ENCODE measurements at regions of chr1 and their contacts with region 1.

Region 1: GRCh38 chr1:214637722-214638458 is 34.9 kb downstream of the CENPF start:
- DNase-seq: peak in 5 of 9 experiments; percentile 14 to 64 (median 28)
- ATAC-seq: peak; percentile 42
- H3K4me3 ChIP-seq: no peak overlapping the region
- H3K4me3 Mint-ChIP-seq: peak overlapping the region; percentile 35
- H3K27ac ChIP-seq: no peak overlapping the region
- H3K27ac Mint-ChIP-seq: peak overlapping the region; percentile 80
- H3K4me1 ChIP-seq: peaks cover 52% of the 10 kb centered on the region
- H3K4me1 Mint-ChIP-seq: peaks cover 24% of the 10 kb centered on the region
- H3K27me3 ChIP-seq: no peaks in the 10 kb centered on the region
- H3K27me3 Mint-ChIP-seq: no peaks in the 10 kb centered on the region
- CTCF ChIP-seq: peak; percentile 67

Region 2: DNA sequence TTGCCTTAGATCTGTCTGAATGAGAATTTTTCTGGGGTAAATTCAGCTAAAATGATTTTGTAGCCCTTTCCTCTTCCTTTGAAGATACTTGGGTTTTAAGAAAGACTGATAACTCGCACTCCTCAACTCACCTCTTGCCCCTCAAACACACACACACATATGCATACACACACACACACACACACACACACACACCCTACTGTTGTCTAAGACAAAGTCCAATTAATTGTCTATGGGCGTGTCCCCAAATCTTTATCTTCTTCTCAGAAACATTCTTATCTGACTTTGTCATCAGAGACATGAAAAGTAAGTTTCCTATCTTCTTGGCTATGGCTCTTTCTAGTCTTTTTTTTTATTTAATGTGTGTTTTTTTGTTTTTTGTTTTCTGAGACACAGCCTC is 393.0 kb before region 1 on chr1:
- CTCF ChIA-PET with region 1: no interaction called
- POLR2A ChIA-PET with region 1: no interaction called
- intact Hi-C with region 1: no loop called
- DNase-seq: no peak
- ATAC-seq: no peak
- H3K4me3 ChIP-seq: no peak overlapping the region
- H3K4me3 Mint-ChIP-seq: no peak overlapping the region
- H3K27ac ChIP-seq: no peak overlapping the region
- H3K27ac Mint-ChIP-seq: no peak overlapping the region
- H3K4me1 ChIP-seq: no peaks in the 10 kb centered on the region
- H3K4me1 Mint-ChIP-seq: no peaks in the 10 kb centered on the region
- H3K27me3 ChIP-seq: no peaks in the 10 kb centered on the region
- H3K27me3 Mint-ChIP-seq: peaks cover 40% of the 10 kb centered on the region
- CTCF ChIP-seq: no peak

Region 3: DNA sequence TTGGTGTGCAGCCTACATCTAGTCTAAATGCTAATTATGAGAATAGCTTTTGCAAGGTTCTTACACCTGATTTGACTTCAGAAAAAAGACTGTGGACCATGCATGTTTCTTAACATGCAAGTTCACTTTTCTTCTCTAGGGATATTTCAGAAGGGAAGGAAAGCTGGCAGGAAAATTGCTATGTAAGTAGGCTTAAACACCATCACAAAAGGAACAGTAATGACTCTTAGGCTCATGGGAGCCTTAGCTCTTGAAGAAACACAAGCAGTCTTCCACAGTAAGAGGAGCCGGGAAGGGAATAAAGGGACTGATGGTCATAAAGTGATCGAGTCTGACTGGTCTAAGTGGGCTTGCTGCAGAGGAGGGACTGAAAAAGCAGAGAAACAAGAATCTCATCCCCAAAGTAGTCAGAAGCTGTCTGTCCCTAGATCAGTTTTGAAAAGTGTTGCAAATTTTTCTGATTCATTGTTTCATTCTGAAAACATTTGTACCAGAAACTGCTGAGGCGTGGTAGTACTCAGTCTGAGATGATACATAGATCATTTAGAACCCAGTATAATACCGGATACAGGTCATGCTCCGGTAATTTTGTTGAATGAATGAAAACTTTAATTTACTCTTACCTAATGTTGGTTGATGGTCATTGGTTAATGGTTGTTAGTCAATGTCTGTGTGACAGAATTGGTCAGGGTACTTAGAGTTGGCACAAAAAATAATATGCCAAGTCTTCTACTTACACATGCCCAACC is 316.0 kb before region 1 on chr1:
- CTCF ChIA-PET with region 1: no interaction called
- POLR2A ChIA-PET with region 1: no interaction called
- intact Hi-C with region 1: no loop called
- DNase-seq: no peak
- ATAC-seq: no peak
- H3K4me3 ChIP-seq: no peak overlapping the region
- H3K4me3 Mint-ChIP-seq: no peak overlapping the region
- H3K27ac ChIP-seq: no peak overlapping the region
- H3K27ac Mint-ChIP-seq: no peak overlapping the region
- H3K4me1 ChIP-seq: no peaks in the 10 kb centered on the region
- H3K4me1 Mint-ChIP-seq: no peaks in the 10 kb centered on the region
- H3K27me3 ChIP-seq: no peaks in the 10 kb centered on the region
- H3K27me3 Mint-ChIP-seq: no peaks in the 10 kb centered on the region
- CTCF ChIP-seq: no peak

Region 4: DNA sequence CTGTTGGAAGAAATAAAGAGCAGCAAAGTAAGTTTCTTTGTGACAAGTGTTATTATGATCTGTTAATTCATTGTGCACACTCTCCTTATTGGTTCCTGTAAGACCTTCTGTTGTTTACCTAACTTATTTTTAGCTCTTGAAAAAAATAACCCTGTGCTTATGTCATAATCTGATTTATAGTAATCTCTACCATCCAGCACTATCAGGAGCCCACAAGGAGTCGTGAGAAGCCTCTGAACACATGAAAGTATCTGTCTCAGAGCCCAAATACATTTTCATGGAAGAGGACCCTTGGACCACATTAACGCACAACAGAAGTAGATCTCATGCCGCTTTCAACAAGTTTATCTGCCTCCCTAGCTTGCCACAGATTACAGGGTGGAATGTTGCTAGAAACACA is 10.9 kb after region 1 on chr1:
- CTCF ChIA-PET with region 1: interaction called, 29 read pairs
- POLR2A ChIA-PET with region 1: interaction called, 4 read pairs
- intact Hi-C with region 1: no loop called
- DNase-seq: no peak
- ATAC-seq: no peak
- H3K4me3 ChIP-seq: no peak overlapping the region
- H3K4me3 Mint-ChIP-seq: no peak overlapping the region
- H3K27ac ChIP-seq: no peak overlapping the region
- H3K27ac Mint-ChIP-seq: no peak overlapping the region
- H3K4me1 ChIP-seq: no peaks in the 10 kb centered on the region
- H3K4me1 Mint-ChIP-seq: no peaks in the 10 kb centered on the region
- H3K27me3 ChIP-seq: no peaks in the 10 kb centered on the region
- H3K27me3 Mint-ChIP-seq: no peaks in the 10 kb centered on the region
- CTCF ChIP-seq: no peak

Measured in CD8-positive, alpha-beta T cell (primary cell).